Activated CD4-positive, alpha-beta T cell treated with anti-CD3 and anti-CD28 coated beads for 36 hours (primary cell): ENCODE measurements at regions of chr2 and their contacts with region 1.

Region 1: DNA sequence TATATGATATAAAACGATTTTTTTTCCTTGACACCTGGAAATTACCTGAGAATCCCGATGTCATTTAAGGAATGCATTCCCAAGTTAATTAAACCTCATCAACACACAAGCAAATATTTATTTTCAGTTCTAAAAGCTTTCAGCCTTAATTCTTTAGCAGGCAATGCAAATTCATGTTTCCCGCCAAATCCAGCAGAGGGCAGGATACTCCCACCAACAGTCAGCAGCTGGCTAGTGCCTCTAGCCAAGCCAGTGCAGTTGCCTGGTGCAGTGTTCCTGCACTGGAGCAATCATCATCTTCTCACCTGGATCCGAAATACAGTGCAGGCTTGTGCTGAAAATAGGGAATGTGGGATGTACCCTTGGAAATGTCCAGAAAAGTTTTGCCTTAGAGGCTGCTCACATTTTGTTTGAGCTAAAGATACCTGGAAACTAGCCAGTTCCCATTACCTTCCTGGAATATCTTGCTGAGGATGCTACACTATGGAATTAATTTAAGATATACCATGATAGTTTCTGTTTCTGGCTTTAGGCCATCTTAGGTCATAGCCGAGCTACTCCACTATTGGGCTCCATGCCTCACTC is 48.4 kb upstream of the CYTIP start:
- DNase-seq: peak; percentile 84
- ATAC-seq: peak; percentile 90
- H3K4me3 Mint-ChIP-seq: no peak overlapping the region
- H3K27ac Mint-ChIP-seq: no peak overlapping the region
- H3K4me1 Mint-ChIP-seq: peaks cover 68% of the 10 kb centered on the region
- H3K27me3 Mint-ChIP-seq: no peaks in the 10 kb centered on the region

Region 2: GRCh38 chr2:157480182-157480961 is 11.9 kb before region 1 on chr2:
- CTCF ChIA-PET with region 1: interaction called, 29 read pairs
- POLR2A ChIA-PET with region 1: interaction called, 5 read pairs
- intact Hi-C with region 1: no loop called
- DNase-seq: peak; percentile 81
- ATAC-seq: peak; percentile 71
- H3K4me3 Mint-ChIP-seq: peak overlapping the region; percentile 64
- H3K27ac Mint-ChIP-seq: peak overlapping the region; percentile 95
- H3K4me1 Mint-ChIP-seq: peaks cover 86% of the 10 kb centered on the region
- H3K27me3 Mint-ChIP-seq: no peaks in the 10 kb centered on the region

Region 3: DNA sequence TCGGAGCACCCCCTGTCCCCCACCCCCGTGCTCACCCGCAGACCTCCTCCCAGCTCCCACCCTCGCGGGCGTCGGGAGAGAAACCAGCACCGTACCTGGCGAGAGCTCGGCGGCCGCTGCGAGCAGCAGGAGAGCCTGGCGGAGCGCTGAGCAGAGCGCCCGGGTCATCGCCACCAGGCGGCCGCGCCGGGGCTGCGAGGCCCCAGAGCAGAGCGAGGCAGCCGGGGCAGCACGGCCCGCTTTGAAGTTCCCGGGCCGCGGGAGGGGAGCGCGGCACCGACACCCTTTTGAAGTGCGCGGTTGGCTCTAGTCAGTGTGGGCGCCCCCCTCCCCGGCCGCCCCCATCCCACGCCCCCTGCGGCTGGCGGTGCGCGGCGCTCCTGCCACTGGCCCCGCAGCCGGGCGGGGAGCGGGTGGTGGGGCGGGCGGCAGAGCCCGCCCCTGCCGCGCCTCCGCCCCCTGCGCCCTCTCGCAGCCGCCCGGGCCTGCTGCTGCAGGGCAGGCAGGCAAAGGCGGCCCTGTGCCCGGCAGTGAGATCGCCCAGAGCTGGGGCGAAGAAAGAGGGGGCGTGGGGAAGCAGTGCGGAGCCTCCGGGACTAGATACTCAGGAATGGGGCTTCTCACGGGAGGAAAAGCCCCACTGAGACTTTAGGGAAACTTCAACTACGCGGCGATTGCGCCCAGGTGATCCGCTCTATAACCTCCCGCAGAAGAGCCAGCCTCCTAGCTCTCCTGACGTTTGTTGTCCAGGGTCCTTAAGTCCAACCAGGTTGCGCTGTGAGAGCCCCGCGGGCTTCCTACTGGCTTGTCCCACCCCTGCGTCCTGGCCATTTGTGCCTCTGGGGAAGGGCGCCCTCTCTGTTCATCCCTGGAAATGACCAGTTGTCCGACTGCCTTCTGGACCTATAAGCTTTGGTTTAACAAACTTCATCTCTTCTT is 136.5 kb after region 1 on chr2 and contains the start of gene ACVR1C:
- CTCF ChIA-PET with region 1: interaction called, 8 read pairs
- POLR2A ChIA-PET with region 1: no interaction called
- intact Hi-C with region 1: loop called (anchors 2 to 10 kb)
- DNase-seq: peak; percentile 80
- ATAC-seq: peak; percentile 82
- H3K4me3 Mint-ChIP-seq: peak within 1 kb of the TSS; percentile 76
- H3K27ac Mint-ChIP-seq: peak within 1 kb of the TSS; percentile 23
- H3K4me1 Mint-ChIP-seq: peaks cover 34% of the 10 kb centered on the region
- H3K27me3 Mint-ChIP-seq: peaks cover 5% of the 10 kb centered on the region
- total RNA-seq, gene ACVR1C: 1.6 to 1.7 TPM

Region 4: DNA sequence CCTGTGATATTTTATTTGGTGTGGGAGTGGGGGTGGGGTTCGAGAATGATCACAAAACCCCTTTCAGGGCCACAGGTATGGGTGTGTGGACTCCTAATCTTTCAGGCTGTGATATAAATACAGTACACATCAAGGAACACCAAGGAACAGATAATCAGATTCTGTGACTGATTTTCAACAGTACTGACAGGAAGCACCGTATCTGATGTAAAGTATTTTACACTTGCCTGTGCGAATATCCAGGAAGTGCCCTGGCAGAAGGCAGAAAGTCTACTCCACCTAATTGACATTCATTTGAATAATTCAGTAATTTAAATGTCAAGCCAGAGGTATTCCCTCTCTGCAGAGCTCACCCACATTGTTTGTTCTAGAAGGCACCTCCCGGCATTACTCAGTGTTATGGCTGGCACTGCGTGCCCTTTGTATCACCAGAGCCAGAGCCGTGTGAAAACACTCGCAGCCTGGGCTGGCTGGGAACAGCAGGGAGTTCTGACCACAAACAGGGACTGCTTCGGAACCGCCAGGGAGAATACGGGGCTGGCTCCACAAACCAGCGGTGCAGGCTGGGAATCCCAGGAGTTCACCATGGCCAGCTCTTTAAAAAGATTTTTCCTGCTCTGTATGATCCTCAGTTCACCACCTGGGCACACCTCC is 292.0 kb after region 1 on chr2:
- CTCF ChIA-PET with region 1: no interaction called
- POLR2A ChIA-PET with region 1: no interaction called
- intact Hi-C with region 1: loop called in 1 of 2 experiments (anchors 5 kb)
- DNase-seq: peak; percentile 42
- ATAC-seq: peak; percentile 71
- H3K4me3 Mint-ChIP-seq: no peak overlapping the region
- H3K27ac Mint-ChIP-seq: peak overlapping the region; percentile 51
- H3K4me1 Mint-ChIP-seq: peaks cover 49% of the 10 kb centered on the region
- H3K27me3 Mint-ChIP-seq: no peaks in the 10 kb centered on the region

Region 5: DNA sequence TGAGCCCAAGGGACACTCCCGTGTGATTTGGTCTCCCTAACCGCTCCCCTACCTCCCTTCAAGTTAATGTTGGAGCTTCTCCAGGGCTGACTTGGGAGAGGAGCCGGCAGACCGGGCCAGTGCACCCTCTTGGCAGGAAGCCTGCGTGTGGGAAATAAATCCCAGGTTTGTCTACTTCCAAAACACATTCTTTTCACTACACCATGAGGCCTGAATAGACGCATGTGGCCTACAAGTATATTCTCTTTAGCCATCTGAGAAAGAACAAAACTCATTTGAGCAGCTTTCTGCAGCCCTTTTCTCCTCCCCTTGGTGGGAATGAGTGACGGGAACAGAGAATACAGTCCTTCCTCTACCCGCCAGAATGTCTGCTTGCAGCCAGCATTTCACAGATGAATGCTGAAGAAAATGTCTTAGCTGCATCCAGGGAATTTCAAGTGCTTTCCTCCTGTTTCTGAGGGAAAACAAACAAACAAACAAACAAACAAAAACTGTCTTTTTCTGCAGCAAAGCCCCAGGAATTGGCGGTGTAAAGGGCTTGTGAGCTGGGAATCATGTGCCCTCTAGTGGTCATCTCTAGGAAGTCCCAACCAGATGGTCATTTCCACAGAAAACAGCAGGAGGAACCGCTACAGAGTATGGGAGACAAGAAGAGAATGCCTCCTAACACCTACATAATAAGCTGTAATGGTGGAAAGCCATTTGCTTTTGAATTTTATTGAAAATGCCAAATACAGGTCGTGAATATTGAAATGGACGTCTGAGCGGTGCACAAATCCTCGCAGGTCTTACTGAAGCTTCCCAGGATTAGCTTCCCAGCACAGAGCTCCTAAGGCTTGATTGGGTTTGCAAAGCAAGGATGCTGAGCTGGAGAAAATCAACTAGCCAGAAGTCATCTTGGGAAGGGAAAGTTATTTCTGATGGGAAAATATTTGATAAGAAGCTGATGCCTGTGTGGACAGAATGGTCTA is 1261.6 kb after region 1 on chr2:
- CTCF ChIA-PET with region 1: no interaction called
- POLR2A ChIA-PET with region 1: no interaction called
- intact Hi-C with region 1: loop called (anchors 5 to 10 kb)
- DNase-seq: peak; percentile 44
- ATAC-seq: peak; percentile 63
- H3K4me3 Mint-ChIP-seq: no peak overlapping the region
- H3K27ac Mint-ChIP-seq: no peak overlapping the region
- H3K4me1 Mint-ChIP-seq: peaks cover 3% of the 10 kb centered on the region
- H3K27me3 Mint-ChIP-seq: peaks cover 11% of the 10 kb centered on the region